Naive thymus-derived CD4-positive, alpha-beta T cell (primary cell): ENCODE measurements at regions of chr7 and their contacts with region 1.

Region 1: GRCh38 chr7:141737834-141738591 is at the start of gene SSBP1:
- DNase-seq: peak; percentile 72 to 95 (median 93)
- ATAC-seq: peak; percentile 94
- H3K4me3 ChIP-seq: peak within 1 kb of the TSS; percentile 84
- H3K4me3 Mint-ChIP-seq: peak within 1 kb of the TSS; percentile 92 to 100 (median 98)
- H3K27ac ChIP-seq: peak within 1 kb of the TSS; percentile 77
- H3K27ac Mint-ChIP-seq: peak within 1 kb of the TSS; percentile 95 to 99 (median 98)
- H3K4me1 ChIP-seq: peaks cover 21 to 22% of the 10 kb centered on the region in 2 donors
- H3K4me1 Mint-ChIP-seq: peaks cover 18 to 63% (median 56%) of the 10 kb centered on the region in 7 donors
- H3K27me3 ChIP-seq: no peaks in the 10 kb centered on the region
- H3K27me3 Mint-ChIP-seq: no peaks in the 10 kb centered on the region
- total RNA-seq, gene SSBP1: 86.4 to 148 (median 107) TPM

Region 2: GRCh38 chr7:140403878-140404564 is 1334.0 kb before region 1 on chr7 and contains the start of gene RAB19:
- CTCF ChIA-PET with region 1: no interaction called
- POLR2A ChIA-PET with region 1: no interaction called
- intact Hi-C with region 1: loop called in 1 of 2 experiments (anchors 2 kb)
- DNase-seq: peak; percentile 7 to 67 (median 56)
- ATAC-seq: peak; percentile 87
- H3K4me3 ChIP-seq: peak within 1 kb of the TSS; percentile 82
- H3K4me3 Mint-ChIP-seq: peak within 1 kb of the TSS; percentile 92 to 99 (median 97)
- H3K27ac ChIP-seq: peak within 1 kb of the TSS; percentile 87
- H3K27ac Mint-ChIP-seq: peak within 1 kb of the TSS; percentile 91 to 99 (median 96)
- H3K4me1 ChIP-seq: peaks cover 8 to 11% of the 10 kb centered on the region in 2 donors
- H3K4me1 Mint-ChIP-seq: peaks cover 13 to 42% (median 29%) of the 10 kb centered on the region in 7 donors
- H3K27me3 ChIP-seq: no peaks in the 10 kb centered on the region
- H3K27me3 Mint-ChIP-seq: peaks cover 0 to 3% (median 0%) of the 10 kb centered on the region in 5 donors
- total RNA-seq, gene RAB19: 1.8 to 13.3 (median 3.3) TPM

Region 3: DNA sequence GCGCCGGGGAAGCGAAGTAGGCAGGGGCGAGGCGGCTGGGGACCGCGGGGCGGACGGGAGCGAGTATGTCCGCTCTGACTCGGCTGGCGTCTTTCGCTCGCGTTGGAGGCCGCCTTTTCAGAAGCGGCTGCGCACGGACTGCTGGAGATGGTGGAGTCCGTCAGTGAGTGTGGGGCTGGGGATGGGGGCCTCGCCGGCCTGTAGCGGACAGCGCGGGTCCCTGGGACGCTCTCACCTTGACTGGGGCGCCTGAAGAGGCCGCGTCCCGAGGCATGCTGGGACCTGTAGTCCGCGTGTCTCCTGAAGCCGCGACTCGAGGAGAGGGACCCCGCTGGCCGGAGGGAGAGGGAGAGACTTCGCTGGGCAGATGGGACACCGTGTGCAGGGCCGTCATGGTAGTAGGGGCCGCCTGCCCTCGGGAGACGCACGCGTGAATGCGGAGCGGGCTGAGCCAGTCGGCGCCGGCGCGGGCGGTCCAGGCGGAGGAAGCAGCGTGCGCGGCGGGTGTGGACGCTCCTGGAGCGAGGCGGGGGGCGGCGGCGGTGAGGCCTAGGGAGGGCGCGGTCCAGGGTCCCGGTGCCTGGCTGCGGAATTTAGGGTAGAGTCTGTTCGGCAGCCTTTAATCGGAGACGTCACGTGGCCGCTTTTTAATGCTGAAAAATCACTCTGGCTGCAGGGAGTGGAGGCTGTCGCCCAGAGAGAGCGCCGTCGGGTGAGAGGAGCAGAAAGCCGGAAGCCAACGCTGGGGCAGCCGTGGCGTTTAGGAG is 1041.2 kb before region 1 on chr7 and contains the start of gene NDUFB2:
- CTCF ChIA-PET with region 1: no interaction called
- POLR2A ChIA-PET with region 1: no interaction called
- intact Hi-C with region 1: loop called (anchors 1 to 2 kb)
- DNase-seq: peak; percentile 72 to 92 (median 90)
- ATAC-seq: peak; percentile 92
- H3K4me3 ChIP-seq: peak within 1 kb of the TSS; percentile 99
- H3K4me3 Mint-ChIP-seq: peak within 1 kb of the TSS; percentile 87 to 100 (median 98)
- H3K27ac ChIP-seq: peak within 1 kb of the TSS; percentile 88
- H3K27ac Mint-ChIP-seq: peak within 1 kb of the TSS; percentile 92 to 99 (median 98)
- H3K4me1 ChIP-seq: peaks cover 12 to 16% of the 10 kb centered on the region in 2 donors
- H3K4me1 Mint-ChIP-seq: peaks cover 18 to 50% (median 40%) of the 10 kb centered on the region in 7 donors
- H3K27me3 ChIP-seq: no peaks in the 10 kb centered on the region
- H3K27me3 Mint-ChIP-seq: no peaks in the 10 kb centered on the region
- total RNA-seq, gene NDUFB2: 88.3 to 184 (median 94.0) TPM

Region 4: GRCh38 chr7:141551094-141551781 is 186.8 kb before region 1 on chr7 and contains the start of gene AGK:
- CTCF ChIA-PET with region 1: interaction called, 3 read pairs
- POLR2A ChIA-PET with region 1: interaction called, 9 read pairs
- intact Hi-C with region 1: loop called (anchors 1 kb)
- DNase-seq: peak; percentile 61 to 83 (median 74)
- ATAC-seq: peak; percentile 96
- H3K4me3 ChIP-seq: peak within 1 kb of the TSS; percentile 89
- H3K4me3 Mint-ChIP-seq: peak within 1 kb of the TSS; percentile 83 to 99 (median 92)
- H3K27ac ChIP-seq: peak within 1 kb of the TSS; percentile 73
- H3K27ac Mint-ChIP-seq: peak within 1 kb of the TSS; percentile 52 to 96 (median 90)
- H3K4me1 ChIP-seq: peaks cover 12 to 17% of the 10 kb centered on the region in 2 donors
- H3K4me1 Mint-ChIP-seq: peaks cover 14 to 44% (median 40%) of the 10 kb centered on the region in 7 donors
- H3K27me3 ChIP-seq: no peaks in the 10 kb centered on the region
- H3K27me3 Mint-ChIP-seq: peaks cover 0 to 4% (median 0%) of the 10 kb centered on the region in 5 donors
- total RNA-seq, gene AGK: 24.3 to 58.8 (median 29.9) TPM

Region 5: DNA sequence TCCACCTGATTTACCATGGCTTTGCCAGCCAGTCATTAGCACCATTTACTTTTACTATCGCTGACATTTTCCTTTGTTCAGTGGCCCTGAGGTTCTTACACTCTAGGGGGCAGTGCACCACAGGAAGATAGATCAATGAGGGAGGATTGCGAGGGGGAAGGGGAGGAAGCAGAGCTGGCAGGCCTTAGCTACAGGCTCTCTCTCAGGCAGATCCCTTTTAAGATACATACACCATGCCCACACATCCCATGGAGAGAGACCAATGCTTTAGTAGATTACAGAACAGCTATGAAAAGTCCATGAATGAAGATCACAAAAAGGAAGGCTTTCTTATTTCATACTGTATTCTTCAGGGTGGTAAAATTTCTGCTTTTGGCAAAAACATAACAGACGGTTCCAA is 83.5 kb before region 1 on chr7:
- CTCF ChIA-PET with region 1: interaction called, 31 read pairs
- POLR2A ChIA-PET with region 1: interaction called, 9 read pairs
- intact Hi-C with region 1: loop called (anchors 1 kb)
- DNase-seq: peak in 8 of 9 donors; percentile 44 to 79 (median 71)
- ATAC-seq: peak; percentile 96
- H3K4me3 ChIP-seq: no peak overlapping the region
- H3K4me3 Mint-ChIP-seq: no peak overlapping the region
- H3K27ac ChIP-seq: no peak overlapping the region
- H3K27ac Mint-ChIP-seq: peak overlapping the region; percentile 5 to 81 (median 41)
- H3K4me1 ChIP-seq: no peaks in the 10 kb centered on the region
- H3K4me1 Mint-ChIP-seq: peaks cover 5 to 11% (median 11%) of the 10 kb centered on the region in 7 donors
- H3K27me3 ChIP-seq: no peaks in the 10 kb centered on the region
- H3K27me3 Mint-ChIP-seq: no peaks in the 10 kb centered on the region

Region 6: GRCh38 chr7:141701489-141702046 is 36.4 kb before region 1 on chr7:
- CTCF ChIA-PET with region 1: interaction called, 19 read pairs
- POLR2A ChIA-PET with region 1: interaction called, 59 read pairs
- intact Hi-C with region 1: loop called (anchors 1 kb)
- DNase-seq: peak; percentile 50 to 81 (median 76)
- ATAC-seq: peak; percentile 90
- H3K4me3 ChIP-seq: peak overlapping the region; percentile 51
- H3K4me3 Mint-ChIP-seq: peak overlapping the region; percentile 80 to 95 (median 88)
- H3K27ac ChIP-seq: peak overlapping the region; percentile 90
- H3K27ac Mint-ChIP-seq: peak overlapping the region; percentile 77 to 96 (median 88)
- H3K4me1 ChIP-seq: peaks cover 7 to 19% of the 10 kb centered on the region in 2 donors
- H3K4me1 Mint-ChIP-seq: peaks cover 39 to 56% (median 49%) of the 10 kb centered on the region in 7 donors
- H3K27me3 ChIP-seq: no peaks in the 10 kb centered on the region
- H3K27me3 Mint-ChIP-seq: peaks cover 0 to 16% (median 0%) of the 10 kb centered on the region in 5 donors

Region 7: DNA sequence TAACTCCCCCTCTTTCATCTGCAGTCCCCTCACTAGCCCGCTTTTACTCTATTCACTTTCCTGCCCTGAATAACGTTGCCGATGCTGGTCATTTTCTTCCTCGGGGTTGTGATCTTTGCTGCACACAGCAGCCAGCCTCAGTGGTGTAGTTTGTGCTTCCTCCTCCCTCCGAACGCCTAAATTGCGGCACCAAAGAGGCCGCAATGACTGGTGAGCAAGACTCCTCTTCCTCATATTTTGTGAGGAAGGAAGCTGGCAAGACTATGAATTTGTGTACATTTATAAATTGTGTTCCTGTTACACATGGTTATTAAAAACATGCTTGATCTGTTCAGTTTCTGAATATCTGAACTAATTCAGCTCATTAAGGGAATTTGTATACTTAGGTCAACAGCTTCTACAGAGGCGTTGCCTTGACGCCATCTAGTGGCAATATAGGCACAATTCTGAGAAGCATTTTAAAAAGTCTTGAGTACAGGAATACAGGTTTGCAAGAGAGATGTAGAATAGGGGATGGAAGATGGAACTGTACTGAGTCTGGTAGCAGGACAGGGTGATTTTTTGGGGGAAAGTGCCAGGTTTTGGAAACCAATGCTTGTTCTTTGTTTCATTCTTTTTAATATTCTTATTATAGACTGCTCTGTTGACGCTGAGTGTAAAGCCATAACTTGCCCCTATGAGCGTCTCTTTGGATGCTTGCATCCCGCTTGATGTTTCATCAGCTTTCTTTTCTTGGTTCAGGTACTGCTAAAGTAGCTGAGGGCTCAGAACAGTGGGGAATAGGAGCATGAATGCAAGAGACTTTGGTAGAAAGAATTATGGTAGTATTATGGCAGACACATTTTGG is 47.9 kb after region 1 on chr7:
- CTCF ChIA-PET with region 1: interaction called, 3 read pairs
- POLR2A ChIA-PET with region 1: no interaction called
- intact Hi-C with region 1: loop called (anchors 1 kb)
- DNase-seq: peak in 5 of 9 donors; percentile 24 to 40 (median 33)
- ATAC-seq: peak; percentile 57
- H3K4me3 ChIP-seq: no peak overlapping the region
- H3K4me3 Mint-ChIP-seq: no peak overlapping the region
- H3K27ac ChIP-seq: no peak overlapping the region
- H3K27ac Mint-ChIP-seq: peak overlapping the region in 1 of 9 donors; percentile 4
- H3K4me1 ChIP-seq: no peaks in the 10 kb centered on the region
- H3K4me1 Mint-ChIP-seq: peaks cover 0 to 5% (median 0%) of the 10 kb centered on the region in 7 donors
- H3K27me3 ChIP-seq: no peaks in the 10 kb centered on the region
- H3K27me3 Mint-ChIP-seq: no peaks in the 10 kb centered on the region

Region 8: DNA sequence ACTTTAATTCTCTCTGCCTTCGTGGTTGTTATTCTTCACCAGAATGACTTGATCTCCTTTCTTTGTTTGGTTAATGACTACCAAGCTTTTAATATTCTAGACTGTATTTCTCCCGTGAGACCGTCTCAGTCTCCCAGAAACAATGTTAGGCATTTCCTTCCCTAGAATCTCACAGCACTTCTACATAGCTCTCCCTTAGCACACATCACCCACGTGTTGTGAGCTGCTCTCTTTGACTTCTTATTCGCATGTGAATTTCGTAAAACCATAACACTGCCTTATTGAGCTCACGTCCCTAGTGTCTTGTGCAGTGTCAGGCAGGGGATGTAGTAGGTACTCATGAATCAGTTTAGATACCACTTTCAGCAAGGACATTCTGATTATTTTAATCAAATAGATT is 316.0 kb after region 1 on chr7:
- CTCF ChIA-PET with region 1: no interaction called
- POLR2A ChIA-PET with region 1: no interaction called
- intact Hi-C with region 1: no loop called
- DNase-seq: no peak
- ATAC-seq: no peak
- H3K4me3 ChIP-seq: no peak overlapping the region
- H3K4me3 Mint-ChIP-seq: no peak overlapping the region
- H3K27ac ChIP-seq: no peak overlapping the region
- H3K27ac Mint-ChIP-seq: no peak overlapping the region
- H3K4me1 ChIP-seq: no peaks in the 10 kb centered on the region
- H3K4me1 Mint-ChIP-seq: peaks cover 0 to 3% (median 0%) of the 10 kb centered on the region in 7 donors
- H3K27me3 ChIP-seq: no peaks in the 10 kb centered on the region
- H3K27me3 Mint-ChIP-seq: peaks cover 5 to 28% (median 13%) of the 10 kb centered on the region in 5 donors

Region 9: GRCh38 chr7:142180426-142180825 is 442.4 kb after region 1 on chr7:
- CTCF ChIA-PET with region 1: no interaction called
- POLR2A ChIA-PET with region 1: no interaction called
- intact Hi-C with region 1: no loop called
- DNase-seq: no peak
- ATAC-seq: no peak
- H3K4me3 ChIP-seq: no peak overlapping the region
- H3K4me3 Mint-ChIP-seq: no peak overlapping the region
- H3K27ac ChIP-seq: no peak overlapping the region
- H3K27ac Mint-ChIP-seq: no peak overlapping the region
- H3K4me1 ChIP-seq: no peaks in the 10 kb centered on the region
- H3K4me1 Mint-ChIP-seq: peaks cover 0 to 4% (median 0%) of the 10 kb centered on the region in 7 donors
- H3K27me3 ChIP-seq: no peaks in the 10 kb centered on the region
- H3K27me3 Mint-ChIP-seq: peaks cover 0 to 12% (median 8%) of the 10 kb centered on the region in 5 donors